Spleen (tissue), 13 donors: ENCODE measurements at regions of chr12 and their contacts with region 1.

Region 1: DNA sequence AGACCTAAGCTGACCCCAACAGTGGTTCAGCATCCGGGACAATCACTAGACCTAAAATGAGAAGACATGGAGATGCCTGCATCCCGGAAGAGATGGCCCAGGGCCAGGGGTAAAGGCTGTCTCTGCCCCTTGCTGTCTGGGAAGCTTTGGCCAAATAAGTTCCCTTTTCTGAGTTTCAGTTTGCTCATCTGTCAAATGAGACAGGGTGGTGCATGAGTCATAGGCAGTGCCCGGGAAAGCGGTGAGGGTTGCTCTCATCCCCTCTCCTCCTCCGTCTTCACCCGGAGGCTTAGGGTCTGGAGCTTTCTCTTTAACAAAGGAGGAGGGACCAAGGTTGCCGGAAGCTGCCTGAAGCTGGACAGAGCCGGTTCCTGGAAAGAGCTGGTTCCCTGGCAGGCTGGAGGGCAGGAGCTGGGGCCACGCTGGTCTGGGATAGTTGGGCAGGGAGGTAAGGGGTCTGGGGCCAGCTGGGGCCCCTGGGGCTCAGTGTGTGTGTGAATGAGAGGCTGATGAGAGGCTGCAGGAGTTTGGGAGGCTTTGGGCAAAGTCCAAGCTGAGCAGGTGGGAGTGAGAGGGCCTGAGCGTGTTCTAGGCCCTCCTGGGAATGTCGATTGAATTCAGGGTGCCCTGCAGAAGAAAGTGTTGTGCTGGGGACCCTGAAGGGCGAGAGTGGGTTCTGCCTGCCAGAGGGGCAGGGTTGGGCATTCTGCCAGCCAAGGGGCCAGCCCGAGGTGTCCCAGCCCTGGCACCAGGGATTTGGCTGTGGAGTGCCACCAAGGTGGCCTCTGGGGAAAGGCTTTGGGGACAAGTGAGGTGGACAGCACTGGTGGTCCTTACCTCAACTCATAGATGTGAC is at the start of gene SDSL:
- DNase-seq: peak; percentile 84
- H3K4me3 ChIP-seq: peak within 1 kb of the TSS; percentile 9 to 66 (median 36)
- H3K27ac ChIP-seq: peak within 1 kb of the TSS in 7 of 8 donors; percentile 37 to 81 (median 72)
- H3K4me1 ChIP-seq: peaks cover 11 to 37% (median 19%) of the 10 kb centered on the region in 6 donors
- H3K27me3 ChIP-seq: peaks cover 0 to 17% (median 0%) of the 10 kb centered on the region in 7 donors
- CTCF ChIP-seq: no peak
- POLR2A ChIP-seq: no peak
- total RNA-seq, gene SDSL: 2.0 to 8.4 (median 4.7) TPM

Region 2: DNA sequence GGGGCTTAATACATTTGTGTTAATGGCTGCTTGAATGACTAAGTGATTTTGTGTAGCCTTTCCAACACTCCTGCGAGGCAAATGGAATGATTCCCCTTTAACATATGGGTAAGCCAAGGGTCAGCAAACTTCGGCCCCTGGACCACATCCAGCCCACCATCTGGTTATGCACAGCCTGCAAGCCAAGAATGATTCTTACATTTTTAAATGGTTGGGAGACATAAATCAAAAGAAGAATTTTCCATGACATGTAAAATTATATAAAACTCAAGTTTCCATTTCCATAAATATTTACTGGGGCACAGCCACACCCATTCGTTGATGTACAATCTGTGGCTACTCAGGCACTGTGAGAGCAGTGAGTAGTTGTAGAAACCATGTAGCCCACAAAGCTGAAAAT is 96.3 kb before region 1 on chr12:
- intact Hi-C with region 1: loop called (anchors 10 kb)
- DNase-seq: no peak
- H3K4me3 ChIP-seq: no peak overlapping the region
- H3K27ac ChIP-seq: peak overlapping the region in 5 of 8 donors; percentile 52 to 72 (median 63)
- H3K4me1 ChIP-seq: peaks cover 10 to 73% (median 33%) of the 10 kb centered on the region in 6 donors
- H3K27me3 ChIP-seq: no peaks in the 10 kb centered on the region
- CTCF ChIP-seq: no peak
- POLR2A ChIP-seq: no peak